ENCODE measurements at regions of chr1 and their contacts with region 1.

Region 1: GRCh38 chr1:91582431-91582921 is 81.8 kb downstream of the CDC7 start:
- DNase-seq: no peak
- ATAC-seq: no peak

Region 2: GRCh38 chr1:91450260-91450659 is 132.2 kb before region 1 on chr1:
- intact Hi-C with region 1: no loop called
- DNase-seq: no peak
- ATAC-seq: no peak

Region 3: DNA sequence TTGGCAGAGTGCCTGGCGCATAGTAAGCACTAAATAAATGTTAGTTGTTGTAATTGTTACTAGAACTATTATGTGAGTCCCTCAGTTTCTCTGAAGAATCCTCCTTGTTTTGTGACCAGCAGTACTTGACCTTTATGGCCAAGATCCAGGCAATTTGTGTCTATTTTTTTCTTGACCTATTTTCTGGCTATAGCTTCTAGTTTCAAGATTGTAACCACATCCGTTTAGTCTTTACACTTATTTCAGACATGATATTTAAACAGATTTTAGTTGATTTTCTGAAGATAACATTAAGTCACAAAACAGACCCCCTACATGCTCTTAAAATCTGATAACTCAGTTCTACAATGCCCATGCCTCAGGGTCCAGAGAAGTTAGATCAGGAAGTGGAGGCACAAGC is 31.5 kb before region 1 on chr1:
- intact Hi-C with region 1: loop called (anchors 2 kb)
- DNase-seq: no peak
- ATAC-seq: no peak

Region 4: DNA sequence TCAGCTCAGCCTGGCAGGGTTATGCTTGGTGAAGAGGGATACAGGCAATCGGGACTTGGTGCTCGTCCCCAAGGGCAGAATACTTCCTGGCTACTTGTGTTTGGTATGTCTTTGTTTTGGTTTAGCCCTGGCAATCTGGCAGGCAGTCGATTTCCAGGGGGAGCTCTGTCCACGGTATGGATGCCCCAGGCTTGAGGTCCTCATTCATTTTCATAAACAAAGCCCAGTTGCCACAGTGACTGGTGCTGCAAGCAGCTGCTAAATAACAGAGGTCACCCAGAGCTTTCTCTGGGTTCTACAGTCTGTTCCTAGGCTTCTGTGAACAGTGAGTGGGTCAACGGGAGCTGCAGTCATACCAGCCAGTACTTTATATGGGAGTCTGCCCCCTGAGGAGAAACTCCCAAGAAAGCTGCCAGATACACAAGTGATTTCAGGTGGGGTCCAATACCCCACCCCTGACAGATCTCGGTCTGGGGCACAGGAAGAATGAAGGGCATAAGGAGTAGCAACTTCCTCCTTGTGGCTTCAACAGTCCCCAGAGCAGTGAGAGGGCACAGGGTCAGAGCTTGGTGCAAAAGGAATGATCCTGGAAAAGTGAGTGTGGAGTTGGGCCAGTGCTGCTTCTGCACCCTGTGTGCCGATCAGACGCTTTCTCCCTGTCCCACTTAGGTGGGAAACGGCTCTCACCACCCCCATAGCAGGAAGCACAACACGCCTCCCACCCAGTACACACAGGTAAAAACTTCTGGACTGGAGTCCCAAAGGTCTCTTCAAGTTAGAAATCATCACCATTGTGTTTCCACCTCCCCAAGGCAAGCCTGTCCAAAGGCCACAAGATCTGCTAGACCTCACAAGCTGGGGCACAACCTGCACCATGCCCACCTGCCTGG is 248.0 kb after region 1 on chr1:
- intact Hi-C with region 1: loop called (anchors 5 kb)
- DNase-seq: peak; percentile 77
- ATAC-seq: peak; percentile 76

Measured in Right ventricle myocardium inferior (tissue), 1 donor.